ENCODE measurements at regions of chr10 and their contacts with region 1.

Region 1: DNA sequence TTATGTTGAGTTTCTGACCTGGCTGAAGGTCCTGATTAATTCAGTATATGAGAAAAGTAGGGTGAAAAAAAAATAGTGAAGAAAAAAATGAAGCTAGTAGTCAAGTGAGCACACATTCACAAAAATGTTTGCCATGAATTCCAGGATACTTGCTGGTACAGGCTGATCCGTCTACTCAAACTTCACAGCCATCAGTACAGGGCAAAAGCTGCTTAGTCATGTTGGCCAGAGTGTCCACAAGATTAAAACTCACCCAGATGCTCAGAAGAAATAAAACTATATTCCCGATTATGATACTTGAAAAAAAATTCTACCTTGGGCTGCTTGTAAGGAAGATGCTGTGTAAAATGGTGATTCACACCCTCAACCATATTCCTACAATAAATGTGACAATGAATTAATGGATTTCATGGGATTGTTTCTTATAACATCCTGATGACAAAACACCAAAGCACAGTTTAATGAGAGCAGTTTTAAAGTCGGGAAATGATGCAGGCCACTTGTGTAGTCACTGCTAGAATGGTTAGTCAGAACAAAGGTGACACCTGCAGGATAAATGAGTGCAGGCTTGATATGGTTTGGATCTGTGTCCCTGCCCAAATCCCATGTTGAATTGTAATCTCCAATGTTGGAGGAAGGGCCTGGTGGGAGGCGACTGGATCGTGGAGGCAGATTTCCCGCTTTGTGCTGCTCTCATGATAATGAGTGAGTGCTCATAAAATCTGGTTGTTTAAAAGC is 49.2 kb upstream of the ANKRD1 start:
- DNase-seq: no peak

Region 2: DNA sequence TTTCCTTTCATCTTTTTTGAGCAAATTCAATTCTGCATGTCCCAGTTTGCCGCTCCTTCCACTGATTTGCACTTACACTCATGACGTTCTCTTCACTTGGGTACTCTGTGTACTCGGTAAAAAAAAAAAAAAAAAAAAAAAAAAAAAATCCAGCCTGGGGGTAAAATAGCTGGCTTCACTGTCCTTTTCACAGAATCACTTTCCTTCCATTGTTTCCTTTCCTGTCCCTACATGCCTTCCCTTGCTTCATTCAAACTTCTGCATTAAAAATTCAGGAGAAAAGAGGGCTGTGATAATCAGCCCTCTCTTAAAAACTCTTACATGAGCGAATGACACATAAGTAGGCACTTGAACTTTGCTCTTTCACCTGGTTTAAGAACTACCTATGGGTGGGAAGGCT is 57.9 kb before region 1 on chr10:
- CTCF ChIA-PET with region 1: interaction called, 12 read pairs
- POLR2A ChIA-PET with region 1: interaction called, 6 read pairs
- DNase-seq: no peak

Region 3: GRCh38 chr10:90959826-90960225 is 10.3 kb before region 1 on chr10:
- CTCF ChIA-PET with region 1: no interaction called
- POLR2A ChIA-PET with region 1: no interaction called
- DNase-seq: no peak

Region 4: GRCh38 chr10:90985321-90985933 is 15.3 kb after region 1 on chr10:
- CTCF ChIA-PET with region 1: no interaction called
- POLR2A ChIA-PET with region 1: no interaction called
- DNase-seq: no peak